Psoas muscle (tissue), 8 donors: ENCODE measurements at regions of chr1 and their contacts with region 1.

Region 1: GRCh38 chr1:10628685-10629084 is 153.9 kb downstream of the PEX14 start:
- DNase-seq: peak in 1 of 2 donors; percentile 54
- ATAC-seq: peak in 3 of 4 donors; percentile 12 to 21 (median 16)
- H3K4me3 ChIP-seq: no peak overlapping the region
- H3K27ac ChIP-seq: no peak overlapping the region
- H3K4me1 ChIP-seq: no peaks in the 10 kb centered on the region
- H3K27me3 ChIP-seq: no peaks in the 10 kb centered on the region
- CTCF ChIP-seq: no peak

Region 2: GRCh38 chr1:10540277-10541005 is 88.2 kb before region 1 on chr1:
- intact Hi-C with region 1: loop called in 1 of 2 experiments (anchors 5 kb)
- DNase-seq: no peak
- ATAC-seq: peak; percentile 55 to 69 (median 68)
- H3K4me3 ChIP-seq: no peak overlapping the region
- H3K27ac ChIP-seq: peak overlapping the region; percentile 86
- H3K4me1 ChIP-seq: peaks cover 48% of the 10 kb centered on the region
- H3K27me3 ChIP-seq: no peaks in the 10 kb centered on the region
- CTCF ChIP-seq: no peak

Region 3: GRCh38 chr1:10679496-10680220 is 51.0 kb after region 1 on chr1:
- intact Hi-C with region 1: no loop called
- DNase-seq: no peak
- ATAC-seq: peak in 3 of 4 donors; percentile 16 to 28 (median 21)
- H3K4me3 ChIP-seq: no peak overlapping the region
- H3K27ac ChIP-seq: peak overlapping the region; percentile 36
- H3K4me1 ChIP-seq: peaks cover 82% of the 10 kb centered on the region
- H3K27me3 ChIP-seq: no peaks in the 10 kb centered on the region
- CTCF ChIP-seq: no peak